Left colon (tissue), 2 donors: ENCODE measurements at regions of chr7 and their contacts with region 1.

Region 1: GRCh38 chr7:106176414-106177299 is 64.5 kb upstream of the SYPL1 start:
- DNase-seq: peak; percentile 60 to 86
- ATAC-seq: peak; percentile 95

Region 2: GRCh38 chr7:105782391-105783042 is 394.1 kb before region 1 on chr7:
- intact Hi-C with region 1: no loop called
- DNase-seq: no peak
- ATAC-seq: no peak

Region 3: DNA sequence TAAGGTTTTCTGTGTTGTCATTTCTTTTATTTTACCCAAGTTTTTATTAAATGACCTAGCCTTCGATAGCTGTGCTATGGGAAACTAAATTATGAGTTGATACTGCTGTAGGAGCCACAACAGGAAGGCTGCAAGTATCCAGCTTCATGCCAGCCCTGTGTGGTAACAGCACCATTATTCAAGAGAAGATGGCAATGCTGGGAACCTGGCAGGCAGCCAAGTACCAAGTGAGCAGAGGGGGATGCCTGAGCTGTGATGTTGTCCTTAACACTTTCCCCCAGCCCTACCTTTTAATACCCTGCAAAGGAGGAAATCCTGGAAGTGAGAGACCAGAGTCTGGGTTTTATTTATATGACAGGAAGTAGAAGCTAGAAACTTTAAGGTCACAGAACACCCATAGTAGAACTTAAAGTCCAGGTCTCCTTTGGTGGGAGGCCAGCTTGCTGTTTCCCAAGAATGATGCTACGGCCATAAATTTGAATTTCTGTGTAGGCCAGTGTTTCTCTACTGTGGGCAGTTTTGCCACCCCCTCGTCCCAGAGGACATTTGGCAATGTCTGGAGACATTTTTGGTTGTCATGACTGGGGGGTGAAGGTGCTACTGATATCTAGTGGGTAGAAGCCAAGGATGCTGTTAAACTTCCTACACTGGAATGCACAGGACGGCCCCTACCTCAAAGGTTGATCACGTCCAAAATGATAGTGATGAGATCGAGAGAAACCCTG is 291.1 kb before region 1 on chr7:
- intact Hi-C with region 1: no loop called
- DNase-seq: no peak
- ATAC-seq: peak; percentile 26

Region 4: DNA sequence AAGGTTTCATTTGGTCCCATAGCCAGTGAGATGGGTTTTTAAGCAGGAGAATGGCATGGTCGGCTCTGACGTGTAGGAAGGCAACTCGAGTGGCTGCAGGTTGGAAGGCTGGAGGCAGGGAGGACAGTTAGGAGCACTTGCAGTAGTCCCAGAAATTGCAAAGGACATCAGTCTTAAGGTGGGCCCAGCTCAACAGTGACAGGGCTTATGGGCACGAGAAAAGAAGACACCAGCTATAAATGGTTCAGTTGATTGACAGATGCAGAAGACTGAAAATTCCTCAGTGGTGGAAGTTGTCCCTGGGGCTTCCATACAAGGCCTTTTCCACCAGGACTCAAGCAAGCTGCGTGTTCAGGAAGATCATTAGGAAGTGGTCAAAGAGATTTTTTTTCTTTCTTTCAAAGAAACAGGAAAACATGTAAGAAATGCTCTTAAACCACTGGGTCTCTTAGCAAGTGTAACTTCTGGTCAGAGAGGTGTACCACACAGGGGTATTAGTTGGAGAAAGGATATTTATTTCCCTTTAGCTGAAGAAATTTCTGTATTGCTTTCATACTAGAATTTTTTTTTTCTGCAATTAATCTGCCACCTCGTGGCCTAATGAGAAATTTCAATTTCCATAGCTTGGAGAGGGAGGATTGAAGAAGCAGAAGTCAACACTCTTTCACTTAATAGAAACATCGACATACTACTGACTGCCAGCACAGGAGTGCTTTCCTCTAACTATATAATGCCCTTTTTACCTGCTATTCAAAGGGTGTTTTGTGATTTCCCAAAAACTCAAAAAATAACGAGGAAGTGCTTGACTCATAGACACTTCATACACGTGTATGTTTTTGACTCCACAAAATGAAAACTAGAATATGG is 285.6 kb after region 1 on chr7:
- intact Hi-C with region 1: loop called (anchors 2 to 5 kb)
- DNase-seq: no peak
- ATAC-seq: peak; percentile 42